Activated CD8-positive, alpha-beta T cell treated with anti-CD3 and anti-CD28 coated beads for 36 hours (primary cell): ENCODE measurements at regions of chr7 and their contacts with region 1.

Region 1: DNA sequence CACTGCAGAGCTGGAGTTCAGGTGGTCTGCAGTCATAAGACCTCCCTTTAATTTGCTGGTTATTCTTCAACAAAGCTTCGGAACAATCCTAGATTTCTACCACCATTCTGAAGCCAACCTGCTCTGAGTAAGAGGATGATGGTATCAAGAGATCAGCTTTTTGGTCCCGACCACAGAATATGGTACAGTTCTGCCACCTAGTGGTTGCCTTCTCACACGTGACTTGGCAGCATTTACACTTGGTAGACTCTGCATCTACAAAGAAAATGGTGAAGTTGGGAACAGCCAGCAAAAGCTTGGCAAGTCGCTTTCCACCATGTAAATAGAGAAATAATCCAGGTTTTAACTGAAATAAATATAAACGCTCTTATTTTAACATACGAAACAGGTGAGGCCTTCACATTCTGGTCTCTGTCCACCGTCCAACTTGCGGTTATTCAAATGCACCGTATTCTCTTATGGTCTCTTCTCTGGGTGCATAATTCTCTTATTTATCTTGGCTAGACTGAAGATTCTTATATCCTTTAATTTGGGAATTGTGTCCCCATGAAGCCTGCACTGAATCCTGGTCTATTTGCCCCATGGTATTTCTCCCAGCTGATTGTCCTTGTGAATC is 173.9 kb upstream of the GRM3 start:
- DNase-seq: peak; percentile 70
- ATAC-seq: peak; percentile 76
- H3K4me3 Mint-ChIP-seq: no peak overlapping the region
- H3K27ac Mint-ChIP-seq: no peak overlapping the region
- H3K4me1 Mint-ChIP-seq: no peaks in the 10 kb centered on the region
- H3K27me3 Mint-ChIP-seq: no peaks in the 10 kb centered on the region
- CTCF ChIP-seq: peak; percentile 62

Region 2: DNA sequence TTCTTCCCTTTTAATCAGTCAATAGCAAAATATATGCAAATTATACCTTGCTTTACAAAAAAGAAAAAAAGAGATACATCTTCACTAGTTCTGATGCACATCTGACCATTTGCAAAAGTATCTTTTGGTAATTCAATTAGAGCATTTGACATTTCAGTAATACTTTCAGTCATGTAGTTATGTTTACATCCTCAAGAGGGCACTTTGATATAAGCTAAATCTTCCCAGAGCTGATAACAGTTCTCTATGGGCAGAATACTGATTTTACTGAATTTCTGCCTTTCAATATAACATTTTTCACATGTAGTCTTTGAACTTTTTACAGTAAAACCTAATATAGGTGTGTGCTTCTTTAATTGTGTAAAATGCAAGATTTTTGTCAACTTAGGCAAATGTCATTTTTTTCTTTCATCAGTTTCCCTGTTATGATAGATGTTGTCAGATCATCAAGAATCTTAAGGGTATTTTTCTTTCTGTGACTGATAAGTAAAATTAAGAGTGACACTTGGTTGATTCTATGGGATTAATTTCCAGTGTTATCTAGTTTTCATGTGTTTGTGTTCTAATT is 579.5 kb before region 1 on chr7:
- CTCF ChIA-PET with region 1: interaction called, 5 read pairs
- POLR2A ChIA-PET with region 1: no interaction called
- intact Hi-C with region 1: loop called (anchors 5 kb)
- DNase-seq: no peak
- ATAC-seq: no peak
- H3K4me3 Mint-ChIP-seq: no peak overlapping the region
- H3K27ac Mint-ChIP-seq: no peak overlapping the region
- H3K4me1 Mint-ChIP-seq: no peaks in the 10 kb centered on the region
- H3K27me3 Mint-ChIP-seq: no peaks in the 10 kb centered on the region
- CTCF ChIP-seq: peak; percentile 49

Region 3: DNA sequence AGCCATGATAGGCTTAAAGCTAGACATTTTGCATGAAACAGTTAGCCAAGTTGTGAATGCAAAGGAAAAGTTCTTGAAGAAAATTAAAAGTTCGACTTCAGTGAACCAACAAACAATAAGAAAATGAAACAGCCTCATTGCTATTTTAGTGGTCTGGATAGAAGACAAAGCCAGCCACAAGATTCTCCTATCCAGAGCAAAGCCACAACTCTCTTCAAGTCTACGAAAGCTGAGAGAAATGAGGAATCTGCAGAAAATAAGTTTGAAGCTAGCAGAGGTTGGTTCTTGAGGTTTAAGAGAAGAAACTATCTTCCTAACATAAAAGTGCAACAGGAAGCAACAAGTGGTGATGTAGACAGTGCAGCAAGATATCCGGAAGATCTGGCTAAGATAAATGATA is 97.5 kb before region 1 on chr7:
- CTCF ChIA-PET with region 1: no interaction called
- POLR2A ChIA-PET with region 1: no interaction called
- intact Hi-C with region 1: no loop called
- DNase-seq: no peak
- ATAC-seq: no peak
- H3K4me3 Mint-ChIP-seq: no peak overlapping the region
- H3K27ac Mint-ChIP-seq: no peak overlapping the region
- H3K4me1 Mint-ChIP-seq: no peaks in the 10 kb centered on the region
- H3K27me3 Mint-ChIP-seq: no peaks in the 10 kb centered on the region
- CTCF ChIP-seq: no peak